AG04449 (cell line): ENCODE measurements at regions of chr2 and their contacts with region 1.

Region 1: DNA sequence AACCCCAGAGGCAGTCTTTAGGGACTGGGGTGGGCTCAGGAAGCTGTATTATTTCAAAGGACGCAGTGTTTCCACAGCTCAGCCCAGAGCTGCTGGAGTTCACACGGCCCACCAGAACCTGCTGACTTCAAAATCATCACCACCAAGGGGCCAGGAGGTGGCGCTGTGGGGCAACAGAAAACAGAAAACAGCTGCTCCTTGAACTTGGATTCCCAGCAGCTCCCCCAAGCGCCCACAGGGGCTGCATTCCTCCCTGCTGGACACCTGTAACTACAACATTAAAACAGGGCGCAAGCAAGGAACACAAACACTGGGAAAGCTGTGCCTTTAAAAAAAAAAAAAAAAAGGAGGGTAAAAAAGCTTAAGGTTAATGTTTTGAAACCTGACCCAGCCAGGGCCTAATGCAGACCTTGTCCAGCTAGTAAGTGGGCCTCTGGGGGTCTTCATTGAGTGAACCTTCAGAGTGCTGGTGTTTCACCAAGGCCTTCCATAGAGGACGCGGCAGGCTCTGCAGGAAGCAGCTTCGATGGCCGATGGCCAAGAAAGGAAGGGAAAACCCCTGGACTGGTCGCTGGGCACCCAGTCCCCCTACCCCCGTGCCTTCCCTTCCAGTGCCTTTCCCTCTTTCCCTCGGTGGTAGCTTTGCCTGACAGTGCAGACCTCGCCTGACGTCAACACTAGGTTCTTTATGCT is 25.9 kb downstream of the MLPH start:
- DNase-seq: no peak
- H3K4me3 ChIP-seq: no peak overlapping the region
- CTCF ChIP-seq: peak; percentile 87

Region 2: DNA sequence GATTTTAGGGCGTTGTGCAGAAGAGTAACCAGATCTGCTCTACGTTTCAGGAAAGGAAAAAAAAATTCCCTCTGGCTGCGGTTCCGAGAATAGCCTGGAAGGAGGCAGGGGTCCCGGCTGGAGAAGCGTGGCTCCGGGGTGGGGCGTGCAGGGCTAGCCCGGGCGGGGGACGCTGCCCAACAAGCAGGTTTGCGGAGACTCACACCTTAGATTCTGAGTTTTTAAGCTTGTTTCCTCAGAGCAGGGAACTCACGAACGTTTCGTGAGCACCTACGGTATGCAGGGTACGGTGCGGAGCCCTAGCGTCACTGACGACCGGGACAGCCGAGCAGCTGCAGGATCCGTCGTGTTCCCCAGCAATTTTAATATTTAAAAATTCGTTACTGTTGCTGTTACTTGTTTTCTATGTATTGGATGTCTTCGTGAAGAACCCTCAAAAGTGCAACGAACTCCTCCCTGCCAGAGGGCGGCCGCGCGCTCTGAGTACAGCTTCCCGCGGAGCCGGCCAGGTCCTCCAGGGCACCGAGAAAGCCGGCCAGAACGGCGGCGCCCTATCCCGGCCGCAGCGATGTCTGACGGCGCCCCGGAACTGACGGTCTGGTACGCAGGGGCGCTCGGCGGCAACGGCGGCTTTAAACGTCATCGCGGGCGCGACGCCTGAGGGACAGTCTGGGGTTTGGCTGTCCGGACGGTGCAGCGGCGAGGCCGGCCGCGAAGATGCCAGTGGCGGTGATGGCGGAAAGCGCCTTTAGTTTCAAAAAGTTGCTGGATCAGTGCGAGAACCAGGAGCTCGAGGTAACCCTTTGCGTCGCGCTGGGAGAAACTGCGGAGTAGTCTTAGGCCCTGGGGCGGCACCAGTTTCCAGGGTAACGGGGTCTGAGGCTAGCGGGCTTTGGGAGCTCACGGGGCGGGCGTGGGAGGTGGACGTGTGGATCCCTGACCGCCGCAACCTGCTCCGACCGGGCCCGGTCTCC is 427.4 kb before region 1 on chr2 and contains the start of gene COPS8:
- CTCF ChIA-PET with region 1: interaction called, 10 read pairs
- POLR2A ChIA-PET with region 1: no interaction called
- DNase-seq: no peak
- H3K4me3 ChIP-seq: peak within 1 kb of the TSS; percentile 83
- CTCF ChIP-seq: peak; percentile 25

Region 3: DNA sequence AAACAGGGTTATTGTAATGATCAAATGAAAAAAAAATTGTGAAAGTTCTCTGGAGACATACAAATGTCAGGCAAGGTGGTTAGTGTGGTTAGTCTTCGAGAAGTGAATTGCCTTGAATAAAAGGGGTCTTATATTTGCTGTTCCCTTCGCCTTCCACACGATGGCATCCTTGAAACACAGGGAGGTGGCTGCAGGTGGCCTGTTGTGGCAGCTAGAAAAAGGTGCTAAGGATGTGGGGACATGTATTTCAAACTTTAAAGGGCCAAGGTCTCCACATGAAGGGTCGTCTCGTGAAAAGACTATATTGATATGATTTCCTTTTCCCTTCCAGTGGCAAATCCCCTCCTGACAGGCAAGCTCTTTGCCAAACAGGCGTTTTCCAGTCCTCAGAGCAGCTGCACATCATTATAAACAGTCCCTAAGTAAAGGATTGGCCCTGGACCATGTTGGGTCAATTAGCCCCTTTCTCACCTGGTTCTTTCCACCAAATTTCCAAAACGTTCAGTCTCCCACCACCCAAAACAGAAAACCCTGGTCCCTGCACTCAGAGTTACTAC is 358.8 kb before region 1 on chr2:
- CTCF ChIA-PET with region 1: interaction called, 20 read pairs
- POLR2A ChIA-PET with region 1: no interaction called
- DNase-seq: no peak
- H3K4me3 ChIP-seq: no peak overlapping the region
- CTCF ChIP-seq: peak; percentile 71

Region 4: GRCh38 chr2:237465515-237466218 is 47.3 kb before region 1 on chr2:
- CTCF ChIA-PET with region 1: interaction called, 36 read pairs
- POLR2A ChIA-PET with region 1: no interaction called
- DNase-seq: peak; percentile 95
- H3K4me3 ChIP-seq: no peak overlapping the region
- CTCF ChIP-seq: no peak

Region 5: GRCh38 chr2:237492496-237492890 is 20.4 kb before region 1 on chr2:
- CTCF ChIA-PET with region 1: interaction called, 151 read pairs
- POLR2A ChIA-PET with region 1: interaction called, 3 read pairs
- DNase-seq: no peak
- H3K4me3 ChIP-seq: no peak overlapping the region
- CTCF ChIP-seq: no peak

Region 6: DNA sequence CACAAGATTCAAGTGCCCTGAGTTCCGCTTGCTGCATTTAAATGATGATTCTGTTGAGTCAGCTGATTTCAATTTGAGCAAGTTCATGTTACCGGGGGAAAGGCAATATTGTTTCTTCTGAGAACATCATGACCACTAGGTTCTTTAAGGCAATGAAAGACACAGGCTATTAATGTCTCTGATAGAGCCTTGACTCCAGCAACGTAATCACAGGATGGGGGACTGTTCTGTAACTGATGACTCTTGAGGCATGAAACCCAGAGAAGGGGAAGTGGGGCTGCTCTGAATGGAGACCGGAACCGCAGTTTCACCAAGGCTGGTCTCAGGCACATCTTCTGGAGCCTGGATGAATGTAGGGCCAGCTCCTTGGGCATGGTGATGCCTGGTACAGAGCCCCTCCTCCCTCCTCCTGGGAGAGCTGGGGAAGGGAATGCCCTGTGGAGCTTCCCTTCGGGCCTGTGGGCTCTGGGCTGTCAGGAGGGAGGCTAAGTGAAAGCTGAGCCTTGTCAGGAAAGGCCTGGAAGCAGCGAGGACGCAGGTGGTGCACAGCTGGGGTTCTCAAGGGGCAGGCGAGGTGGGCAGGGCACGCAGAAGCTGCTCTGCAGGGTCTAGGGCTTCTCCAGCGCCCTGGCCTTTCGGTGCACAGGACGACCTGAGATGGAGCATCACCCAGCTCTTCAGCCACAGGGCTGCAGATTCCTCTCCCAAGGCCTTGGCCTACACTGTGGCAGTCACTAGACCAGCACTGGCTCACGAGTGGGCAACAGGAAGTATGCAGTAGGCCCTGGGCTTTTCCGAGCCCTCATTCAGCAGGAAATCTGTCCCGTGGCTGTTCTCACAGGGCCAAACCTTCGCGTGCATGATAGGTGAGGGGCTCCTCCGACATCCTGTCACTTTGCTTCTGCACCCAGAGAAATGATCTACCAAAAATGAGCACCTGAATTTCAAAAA is 16.8 kb after region 1 on chr2:
- CTCF ChIA-PET with region 1: interaction called, 172 read pairs
- POLR2A ChIA-PET with region 1: no interaction called
- DNase-seq: no peak
- H3K4me3 ChIP-seq: no peak overlapping the region
- CTCF ChIP-seq: no peak

Region 7: DNA sequence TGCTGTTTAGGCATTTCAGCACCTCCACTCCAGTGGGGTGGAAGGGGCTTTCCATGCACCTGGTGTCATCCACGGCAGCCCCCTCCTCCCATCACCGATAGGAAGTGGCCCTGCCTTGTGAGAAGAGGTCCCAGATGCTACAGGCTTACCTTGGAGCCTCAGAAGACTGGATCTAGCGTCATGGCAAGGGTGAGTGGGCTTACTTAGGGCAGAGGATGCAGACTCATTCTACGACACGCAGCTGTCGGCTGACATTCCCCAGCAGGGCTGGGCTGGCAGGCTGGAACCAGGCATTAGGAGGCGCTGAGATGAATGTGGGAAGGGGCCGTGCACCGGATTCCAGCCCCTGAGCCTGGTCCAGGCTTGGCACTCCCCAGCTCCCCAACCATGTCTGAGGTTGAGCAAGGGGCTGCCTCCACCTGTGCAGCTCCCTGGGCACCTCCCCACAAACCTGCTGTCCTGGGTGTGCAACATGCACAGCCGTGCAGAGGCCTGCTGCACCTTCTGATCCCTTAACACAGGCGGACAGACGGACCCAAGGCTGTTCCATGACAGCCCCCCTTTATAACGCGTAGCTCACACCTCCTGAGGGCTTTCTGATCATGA is 51.7 kb after region 1 on chr2:
- CTCF ChIA-PET with region 1: interaction called, 12 read pairs
- POLR2A ChIA-PET with region 1: no interaction called
- DNase-seq: no peak
- H3K4me3 ChIP-seq: no peak overlapping the region
- CTCF ChIP-seq: no peak